IMR-90 (cell line): ENCODE measurements at regions of chr4 and their contacts with region 1.

Region 1: DNA sequence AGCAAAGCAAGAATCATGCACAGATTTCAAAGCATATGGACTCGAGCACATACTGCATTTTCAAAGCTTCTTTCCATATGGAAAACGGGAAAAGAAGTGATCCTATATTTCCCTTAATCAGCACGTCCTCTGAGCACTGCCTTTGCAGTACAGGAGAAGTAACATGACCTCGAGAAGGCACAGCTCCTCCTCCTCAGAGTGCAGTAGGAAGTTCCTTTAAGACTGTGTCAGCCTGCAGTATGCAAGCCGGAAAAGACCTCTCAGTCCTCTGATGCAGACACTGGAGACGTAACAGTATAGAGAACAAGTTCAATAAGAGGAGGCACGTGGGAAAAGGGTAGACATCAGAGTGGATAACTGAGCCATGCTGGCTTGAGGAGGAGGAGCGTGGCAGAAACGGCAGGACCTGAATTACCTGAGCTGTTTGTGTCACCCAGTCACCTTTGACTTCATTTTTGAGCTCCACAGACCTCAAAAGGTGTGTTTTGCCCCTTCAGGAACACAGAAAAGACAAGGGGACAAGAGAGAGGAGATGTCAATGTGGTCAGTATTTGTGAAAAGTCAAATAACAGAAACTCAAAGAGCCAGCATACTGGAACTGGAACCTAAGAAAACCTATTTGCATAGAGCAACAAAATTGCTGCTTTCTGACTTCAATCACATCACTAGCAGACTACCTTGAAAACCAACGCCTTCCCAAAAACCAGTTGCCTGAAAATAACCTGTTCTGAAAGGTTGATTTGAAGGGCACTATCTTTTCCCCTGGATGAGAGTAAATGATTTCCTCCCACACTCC is 20.8 kb downstream of the IRF2 start:
- DNase-seq: peak; percentile 95
- ATAC-seq: peak; percentile 96
- H3K4me3 ChIP-seq: no peak overlapping the region
- H3K27ac ChIP-seq: peak overlapping the region; percentile 59
- H3K4me1 ChIP-seq: peaks cover 20% of the 10 kb centered on the region
- H3K27me3 ChIP-seq: no peaks in the 10 kb centered on the region
- CTCF ChIP-seq: no peak
- POLR2A ChIP-seq: no peak
- RAD21 ChIP-seq: peak; percentile 27

Region 2: GRCh38 chr4:183848805-183849204 is 604.8 kb before region 1 on chr4:
- CTCF ChIA-PET with region 1: no interaction called
- POLR2A ChIA-PET with region 1: no interaction called
- dilution Hi-C with region 1: no loop called
- in situ Hi-C with region 1: no loop called
- intact Hi-C with region 1: no loop called
- DNase-seq: no peak
- ATAC-seq: no peak
- H3K4me3 ChIP-seq: no peak overlapping the region
- H3K27ac ChIP-seq: no peak overlapping the region
- H3K4me1 ChIP-seq: no peaks in the 10 kb centered on the region
- H3K27me3 ChIP-seq: peaks cover 7% of the 10 kb centered on the region; the same call in 1 of the 2 replicates
- CTCF ChIP-seq: no peak
- POLR2A ChIP-seq: no peak
- RAD21 ChIP-seq: no peak

Region 3: GRCh38 chr4:184384056-184384809 is 69.3 kb before region 1 on chr4:
- CTCF ChIA-PET with region 1: no interaction called
- POLR2A ChIA-PET with region 1: no interaction called
- dilution Hi-C with region 1: no loop called
- in situ Hi-C with region 1: no loop called
- intact Hi-C with region 1: loop called (anchors 1 kb)
- DNase-seq: peak; percentile 96
- ATAC-seq: peak; percentile 78
- H3K4me3 ChIP-seq: peak overlapping the region; percentile 17; the same call in 1 of the 2 replicates
- H3K27ac ChIP-seq: peak overlapping the region; percentile 92
- H3K4me1 ChIP-seq: peaks cover 27% of the 10 kb centered on the region
- H3K27me3 ChIP-seq: no peaks in the 10 kb centered on the region
- CTCF ChIP-seq: no peak
- POLR2A ChIP-seq: peak; percentile 41; the same call in 1 of the 2 replicates
- RAD21 ChIP-seq: 0 out of 2 replicates have a peak, but pooled peaks have one; percentile 3

Region 4: GRCh38 chr4:184500748-184501589 is 47.4 kb after region 1 on chr4:
- CTCF ChIA-PET with region 1: no interaction called
- POLR2A ChIA-PET with region 1: interaction called, 21 read pairs
- dilution Hi-C with region 1: no loop called
- in situ Hi-C with region 1: no loop called
- intact Hi-C with region 1: no loop called
- DNase-seq: no peak
- ATAC-seq: no peak
- H3K4me3 ChIP-seq: no peak overlapping the region
- H3K27ac ChIP-seq: no peak overlapping the region
- H3K4me1 ChIP-seq: no peaks in the 10 kb centered on the region; the same call in 1 of the 2 replicates
- H3K27me3 ChIP-seq: no peaks in the 10 kb centered on the region
- CTCF ChIP-seq: no peak
- POLR2A ChIP-seq: no peak
- RAD21 ChIP-seq: no peak